Gastrocnemius medialis (tissue), 4 donors: ENCODE measurements at regions of chr11 and their contacts with region 1.

Region 1: DNA sequence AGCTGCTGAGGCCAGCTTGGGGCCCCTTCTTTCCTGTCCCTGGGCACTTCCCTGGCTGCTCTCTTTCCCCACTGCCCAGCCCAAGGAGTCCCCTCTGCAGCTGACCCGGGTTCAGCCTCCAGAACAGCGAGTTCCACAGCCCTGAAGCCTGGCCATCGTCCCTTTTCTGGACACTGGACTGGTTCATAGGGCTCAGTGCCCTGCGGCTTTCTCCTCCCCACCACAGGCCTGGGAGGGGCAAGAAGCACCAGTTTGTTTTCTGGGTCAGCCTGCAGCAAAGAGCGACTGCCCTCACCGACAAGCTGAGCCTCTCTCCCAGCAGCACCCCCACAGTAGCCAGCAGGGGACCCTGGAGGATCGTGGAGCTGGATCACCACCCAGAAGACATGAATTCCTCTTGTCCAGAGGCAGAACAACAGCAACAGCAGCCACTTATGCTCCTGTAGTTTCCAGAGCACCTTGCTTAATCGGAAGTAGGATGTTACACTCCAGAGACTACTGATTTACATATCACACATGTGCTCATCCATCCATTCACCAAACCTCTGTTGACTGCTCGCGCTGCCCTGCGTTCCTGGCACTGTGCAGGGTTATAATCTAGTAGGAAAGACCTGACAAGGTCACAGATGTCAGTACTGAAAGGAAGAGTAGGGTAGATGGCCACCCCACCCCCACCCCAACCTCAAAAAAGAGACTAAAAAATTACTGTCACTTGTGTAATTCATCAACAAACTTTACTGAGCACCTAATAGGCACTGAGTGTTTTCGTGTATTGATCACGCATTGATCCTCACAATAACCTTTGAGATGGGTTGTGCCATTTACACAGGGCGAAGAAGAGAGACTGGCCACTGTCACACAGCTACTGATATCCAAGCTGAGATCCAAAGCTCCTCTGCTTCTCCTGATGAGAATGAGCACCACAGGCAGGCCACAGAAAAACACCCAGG is 13.0 kb upstream of the CXCR5 start:
- DNase-seq: peak; percentile 66 to 67
- ATAC-seq: peak; percentile 68 to 74
- H3K4me3 ChIP-seq: peak overlapping the region; percentile 35 to 46 (median 42)
- H3K27ac ChIP-seq: peak overlapping the region; percentile 89 to 95 (median 94)
- H3K4me1 ChIP-seq: peaks cover 16 to 25% of the 10 kb centered on the region in 2 donors
- H3K27me3 ChIP-seq: no peaks in the 10 kb centered on the region
- CTCF ChIP-seq: no peak
- POLR2A ChIP-seq: peak; percentile 31 to 48

Region 2: GRCh38 chr11:118791111-118791965 is 79.3 kb before region 1 on chr11 and contains the start of gene DDX6:
- in situ Hi-C with region 1: no loop called
- intact Hi-C with region 1: loop called (anchors 1 kb)
- DNase-seq: peak; percentile 86 to 89
- ATAC-seq: peak; percentile 78 to 86
- H3K4me3 ChIP-seq: peak within 1 kb of the TSS; percentile 80 to 96 (median 86)
- H3K27ac ChIP-seq: peak within 1 kb of the TSS; percentile 93 to 100 (median 98)
- H3K4me1 ChIP-seq: peaks cover 27% of the 10 kb centered on the region in 2 donors
- H3K27me3 ChIP-seq: no peaks in the 10 kb centered on the region
- CTCF ChIP-seq: peak; percentile 15 to 57 (median 37)
- POLR2A ChIP-seq: peak; percentile 82 to 90
- total RNA-seq, gene DDX6: 73.4 to 125 (median 98.2) TPM

Region 3: GRCh38 chr11:118820412-118821357 is 50.0 kb before region 1 on chr11:
- in situ Hi-C with region 1: no loop called
- intact Hi-C with region 1: loop called (anchors 5 kb)
- DNase-seq: peak; percentile 85 to 92
- ATAC-seq: peak; percentile 99
- H3K4me3 ChIP-seq: no peak overlapping the region
- H3K27ac ChIP-seq: peak overlapping the region; percentile 58 to 83 (median 73)
- H3K4me1 ChIP-seq: peaks cover 7 to 11% of the 10 kb centered on the region in 2 donors
- H3K27me3 ChIP-seq: no peaks in the 10 kb centered on the region
- CTCF ChIP-seq: no peak
- POLR2A ChIP-seq: no peak